ENCODE measurements at regions of chr10 and their contacts with region 1.

Region 1: GRCh38 chr10:97792141-97792721 is 20.4 kb upstream of the SFRP5 start:
- DNase-seq: peak; percentile 62 to 76 (median 65)
- H3K4me3 ChIP-seq: no peak overlapping the region
- H3K4me3 Mint-ChIP-seq: no peak overlapping the region
- H3K27ac ChIP-seq: no peak overlapping the region
- H3K27ac Mint-ChIP-seq: peak overlapping the region in 4 of 7 donors; percentile 42 to 52 (median 49)
- H3K4me1 ChIP-seq: peaks cover 31% of the 10 kb centered on the region
- H3K4me1 Mint-ChIP-seq: peaks cover 17 to 34% (median 23%) of the 10 kb centered on the region in 4 donors
- H3K27me3 ChIP-seq: no peaks in the 10 kb centered on the region
- H3K27me3 Mint-ChIP-seq: peaks cover 2% of the 10 kb centered on the region in 2 donors

Region 2: DNA sequence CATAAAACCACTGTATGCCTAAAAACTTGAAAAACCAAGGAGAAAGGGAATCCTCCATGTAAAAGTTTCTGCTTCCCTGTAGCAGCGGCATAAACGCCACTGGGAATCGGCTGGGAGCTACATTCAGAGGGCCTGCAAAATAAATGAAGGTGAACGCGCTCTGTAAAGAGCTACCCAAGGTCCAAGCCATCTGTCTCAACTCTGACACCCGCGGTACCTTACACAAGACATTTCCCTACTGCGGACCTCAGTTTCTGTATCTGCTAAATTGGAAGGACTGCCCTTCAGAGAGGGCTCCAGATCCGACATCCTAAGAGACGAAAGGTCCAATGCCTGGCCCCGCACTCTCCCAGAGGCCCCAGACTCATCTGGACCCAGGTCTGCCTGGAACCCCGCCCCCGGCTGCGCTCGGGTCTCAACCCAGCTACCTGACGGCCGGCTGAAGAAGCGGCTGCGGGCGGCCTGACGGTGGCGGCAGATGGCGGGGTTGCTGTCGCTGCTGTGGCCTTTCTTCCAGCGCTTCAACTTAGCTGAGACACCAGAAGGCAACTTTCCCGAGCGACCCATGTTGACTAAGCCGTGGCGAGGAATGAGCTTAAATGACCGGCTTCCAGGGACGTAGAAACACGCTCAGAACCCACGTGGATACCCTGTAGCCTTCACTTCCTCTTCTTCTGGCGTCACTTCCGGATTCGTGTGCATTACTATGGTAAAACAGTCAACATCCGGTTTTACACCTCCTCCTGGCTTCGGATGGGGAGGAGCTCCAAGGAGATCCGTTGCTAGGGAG is 391.4 kb before region 1 on chr10 and contains the start of gene RRP12:
- CTCF ChIA-PET with region 1: no interaction called
- POLR2A ChIA-PET with region 1: no interaction called
- intact Hi-C with region 1: no loop called
- DNase-seq: peak; percentile 89 to 97 (median 95)
- H3K4me3 ChIP-seq: peak within 1 kb of the TSS; percentile 71
- H3K4me3 Mint-ChIP-seq: peak within 1 kb of the TSS; percentile 95 to 99 (median 96)
- H3K27ac ChIP-seq: peak within 1 kb of the TSS; percentile 88
- H3K27ac Mint-ChIP-seq: peak within 1 kb of the TSS; percentile 94 to 99 (median 99)
- H3K4me1 ChIP-seq: peaks cover 15% of the 10 kb centered on the region
- H3K4me1 Mint-ChIP-seq: peaks cover 11 to 23% (median 15%) of the 10 kb centered on the region in 4 donors
- H3K27me3 ChIP-seq: no peaks in the 10 kb centered on the region
- H3K27me3 Mint-ChIP-seq: no peaks in the 10 kb centered on the region
- total RNA-seq, gene RRP12: 18.2 to 20.0 TPM

Region 3: DNA sequence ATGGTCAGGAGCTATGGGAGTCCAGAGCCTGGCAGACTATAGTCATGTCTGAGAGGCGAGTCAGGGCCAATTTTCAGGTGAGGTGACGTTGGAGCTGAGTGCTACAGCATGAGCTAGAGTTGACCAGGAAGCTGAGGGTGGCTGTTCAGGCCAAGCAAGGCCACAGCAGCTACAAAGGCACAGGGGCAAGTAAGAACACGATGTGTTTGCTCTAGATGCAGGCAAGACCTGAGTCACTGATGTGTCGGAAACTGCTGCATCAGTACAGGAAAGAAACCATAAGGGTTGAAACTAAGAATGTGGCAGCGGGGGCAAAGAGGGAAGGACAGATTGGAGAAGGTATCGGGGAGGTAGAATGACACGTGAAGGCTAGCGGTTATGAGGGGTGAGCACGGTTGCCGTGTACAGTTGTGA is 379.3 kb before region 1 on chr10:
- CTCF ChIA-PET with region 1: no interaction called
- POLR2A ChIA-PET with region 1: no interaction called
- intact Hi-C with region 1: no loop called
- DNase-seq: no peak
- H3K4me3 ChIP-seq: no peak overlapping the region
- H3K4me3 Mint-ChIP-seq: peak overlapping the region in 4 of 8 donors; percentile 2 to 60 (median 23)
- H3K27ac ChIP-seq: no peak overlapping the region
- H3K27ac Mint-ChIP-seq: peak overlapping the region; percentile 34 to 91 (median 79)
- H3K4me1 ChIP-seq: peaks cover 38% of the 10 kb centered on the region
- H3K4me1 Mint-ChIP-seq: peaks cover 20 to 43% (median 31%) of the 10 kb centered on the region in 4 donors
- H3K27me3 ChIP-seq: no peaks in the 10 kb centered on the region
- H3K27me3 Mint-ChIP-seq: no peaks in the 10 kb centered on the region

Region 4: DNA sequence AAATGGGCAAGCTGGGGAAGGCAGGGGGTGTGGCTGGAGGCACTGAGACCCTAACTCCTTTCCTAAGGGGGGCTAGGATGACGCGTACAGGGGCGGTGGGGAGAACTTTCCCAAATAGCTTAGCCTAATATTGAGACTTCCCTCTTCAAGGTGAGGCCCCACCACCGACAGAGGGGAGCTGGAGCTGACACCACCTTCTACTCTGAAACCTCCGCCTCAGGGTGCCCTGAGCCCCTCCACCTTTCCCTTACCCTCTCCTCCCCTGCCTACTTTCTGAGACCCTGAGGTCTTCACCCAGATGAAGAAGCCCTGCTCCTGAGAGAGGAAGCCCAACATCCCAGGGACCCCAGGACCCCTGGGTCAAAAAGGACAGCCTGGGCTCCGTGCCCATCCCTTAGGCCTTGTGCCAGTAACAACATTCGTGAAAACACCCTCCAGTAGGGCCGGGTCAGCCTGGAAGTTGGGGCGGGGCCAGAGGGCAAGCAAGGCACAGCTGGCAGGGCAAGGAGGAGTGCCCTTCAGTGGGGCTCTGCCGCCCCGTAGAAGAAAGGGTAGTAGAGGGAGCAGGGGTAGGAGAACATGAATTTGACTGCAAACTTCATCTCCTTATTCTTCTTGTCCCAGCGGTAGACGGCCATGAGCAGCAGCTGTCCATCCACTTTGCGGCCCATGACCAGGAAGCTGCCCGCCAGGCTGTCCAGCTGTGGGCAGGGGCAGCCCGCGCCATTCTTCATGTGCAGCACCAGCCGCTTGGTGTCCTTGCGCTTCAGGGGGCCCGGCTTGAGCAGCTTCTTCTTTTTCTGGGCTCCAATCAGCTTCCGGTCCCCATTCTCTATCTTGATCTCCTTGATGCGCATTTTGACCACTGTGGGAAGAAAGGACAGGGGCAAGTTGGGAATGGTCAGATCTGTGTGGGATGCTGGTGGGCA is 25.0 kb before region 1 on chr10:
- CTCF ChIA-PET with region 1: interaction called, 12 read pairs
- POLR2A ChIA-PET with region 1: interaction called, 3 read pairs
- intact Hi-C with region 1: no loop called
- DNase-seq: no peak
- H3K4me3 ChIP-seq: no peak overlapping the region
- H3K4me3 Mint-ChIP-seq: no peak overlapping the region
- H3K27ac ChIP-seq: no peak overlapping the region
- H3K27ac Mint-ChIP-seq: no peak overlapping the region
- H3K4me1 ChIP-seq: peaks cover 6% of the 10 kb centered on the region
- H3K4me1 Mint-ChIP-seq: peaks cover 2 to 18% (median 9%) of the 10 kb centered on the region in 4 donors
- H3K27me3 ChIP-seq: peaks cover 9% of the 10 kb centered on the region
- H3K27me3 Mint-ChIP-seq: peaks cover 19 to 26% of the 10 kb centered on the region in 2 donors

Region 5: GRCh38 chr10:97827778-97828291 is 35.6 kb after region 1 on chr10:
- CTCF ChIA-PET with region 1: interaction called, 10 read pairs
- POLR2A ChIA-PET with region 1: no interaction called
- intact Hi-C with region 1: no loop called
- DNase-seq: no peak
- H3K4me3 ChIP-seq: no peak overlapping the region
- H3K4me3 Mint-ChIP-seq: no peak overlapping the region
- H3K27ac ChIP-seq: no peak overlapping the region
- H3K27ac Mint-ChIP-seq: peak overlapping the region in 2 of 7 donors; percentile 47 to 66
- H3K4me1 ChIP-seq: peaks cover 28% of the 10 kb centered on the region
- H3K4me1 Mint-ChIP-seq: peaks cover 18 to 34% (median 21%) of the 10 kb centered on the region in 4 donors
- H3K27me3 ChIP-seq: no peaks in the 10 kb centered on the region
- H3K27me3 Mint-ChIP-seq: no peaks in the 10 kb centered on the region

Region 6: GRCh38 chr10:97849687-97850402 is 57.6 kb after region 1 on chr10 and contains the start of gene GOLGA7B:
- CTCF ChIA-PET with region 1: interaction called, 42 read pairs
- POLR2A ChIA-PET with region 1: interaction called, 9 read pairs
- intact Hi-C with region 1: loop called (anchors 5 kb)
- DNase-seq: peak; percentile 60 to 72 (median 70)
- H3K4me3 ChIP-seq: peak within 1 kb of the TSS; percentile 76 to 79
- H3K4me3 Mint-ChIP-seq: peak within 1 kb of the TSS; percentile 92 to 98 (median 94)
- H3K27ac ChIP-seq: peak within 1 kb of the TSS; percentile 32
- H3K27ac Mint-ChIP-seq: peak within 1 kb of the TSS; percentile 87 to 94 (median 91)
- H3K4me1 ChIP-seq: peaks cover 40% of the 10 kb centered on the region
- H3K4me1 Mint-ChIP-seq: peaks cover 29 to 46% (median 39%) of the 10 kb centered on the region in 4 donors
- H3K27me3 ChIP-seq: no peaks in the 10 kb centered on the region
- H3K27me3 Mint-ChIP-seq: no peaks in the 10 kb centered on the region
- total RNA-seq, gene GOLGA7B: 7.6 to 7.9 TPM

Region 7: DNA sequence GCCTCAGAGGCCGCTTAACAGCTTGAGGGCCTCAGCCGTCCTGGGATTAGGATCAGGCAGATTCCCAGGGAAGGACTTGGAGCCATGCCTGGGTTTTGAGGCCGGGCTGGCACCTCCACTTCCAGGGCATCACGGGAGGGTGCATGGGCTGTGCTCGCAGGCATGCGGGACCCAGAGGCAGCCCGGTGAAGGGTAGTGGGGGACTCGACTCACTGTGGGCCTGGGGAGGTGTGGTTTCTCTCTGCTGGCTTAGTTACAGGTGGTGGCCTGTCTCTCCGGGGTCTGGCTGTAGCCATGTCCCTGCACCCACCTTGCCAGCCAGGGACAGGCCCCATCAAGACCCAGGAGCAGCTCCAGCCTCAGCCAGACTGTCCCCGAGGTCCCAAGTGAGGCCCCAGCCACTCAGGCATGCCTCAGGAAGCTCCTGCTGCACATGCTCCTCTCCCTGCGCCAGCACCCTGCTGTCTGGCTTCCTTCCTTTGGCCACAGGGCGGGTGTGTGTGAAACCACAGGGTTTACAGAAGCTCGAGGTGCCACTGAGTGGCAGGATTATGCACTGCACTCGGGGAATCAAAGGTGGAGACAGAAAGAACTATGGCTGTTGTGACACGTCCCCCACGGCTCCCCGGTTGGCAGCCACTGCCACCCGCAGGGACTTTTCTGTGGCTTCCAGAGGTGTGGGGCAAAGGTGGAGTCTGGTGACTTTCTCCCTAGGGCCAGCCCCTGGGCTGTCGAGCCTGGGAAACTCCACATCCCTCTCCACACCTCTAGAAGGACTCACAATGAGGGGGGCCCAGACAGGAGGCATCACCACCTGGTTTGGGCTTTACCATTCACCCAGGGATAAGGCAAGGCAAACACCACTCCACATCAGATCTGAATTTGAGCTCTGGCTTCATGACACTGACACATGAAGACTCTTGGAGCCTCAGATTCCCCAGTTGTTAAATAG is 77.1 kb after region 1 on chr10:
- CTCF ChIA-PET with region 1: interaction called, 392 read pairs
- POLR2A ChIA-PET with region 1: interaction called, 26 read pairs
- intact Hi-C with region 1: loop called (anchors 1 kb)
- DNase-seq: peak; percentile 82 to 87 (median 83)
- H3K4me3 ChIP-seq: no peak overlapping the region
- H3K4me3 Mint-ChIP-seq: peak overlapping the region in 4 of 8 donors; percentile 4 to 64 (median 41)
- H3K27ac ChIP-seq: no peak overlapping the region
- H3K27ac Mint-ChIP-seq: peak overlapping the region; percentile 55 to 87 (median 71)
- H3K4me1 ChIP-seq: peaks cover 16% of the 10 kb centered on the region
- H3K4me1 Mint-ChIP-seq: peaks cover 6 to 14% (median 12%) of the 10 kb centered on the region in 4 donors
- H3K27me3 ChIP-seq: no peaks in the 10 kb centered on the region
- H3K27me3 Mint-ChIP-seq: no peaks in the 10 kb centered on the region

Region 8: DNA sequence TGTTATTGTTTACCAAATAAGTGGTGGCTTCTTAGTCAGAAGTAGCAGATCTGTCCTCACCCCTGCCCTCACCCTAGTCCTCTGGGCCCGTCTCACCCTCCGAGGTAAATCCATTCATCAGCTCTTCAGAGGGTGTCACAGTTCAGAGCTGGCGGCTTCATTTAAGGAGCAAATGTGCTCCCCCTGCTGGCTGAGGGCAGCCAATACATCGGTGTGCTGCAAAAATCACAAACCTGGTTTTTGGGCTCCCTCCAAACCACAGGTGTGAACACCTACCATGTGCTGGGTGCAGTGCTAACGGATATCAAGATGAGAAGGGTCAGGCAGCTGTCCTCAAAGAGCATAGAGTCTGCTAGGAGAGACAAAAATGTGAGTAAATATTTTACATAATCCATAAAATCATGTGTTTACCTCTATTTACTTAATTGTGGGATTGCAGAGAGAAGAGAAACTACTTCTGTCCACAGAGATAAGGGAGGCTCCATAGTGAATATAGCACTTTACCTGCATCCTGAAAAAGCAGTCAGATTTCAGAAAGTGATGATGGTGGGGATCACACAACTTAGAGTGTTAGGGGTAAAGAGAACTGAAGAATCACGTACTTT is 253.7 kb after region 1 on chr10:
- CTCF ChIA-PET with region 1: interaction called, 5 read pairs
- POLR2A ChIA-PET with region 1: no interaction called
- intact Hi-C with region 1: loop called (anchors 5 kb)
- DNase-seq: peak; percentile 46 to 54 (median 47)
- H3K4me3 ChIP-seq: no peak overlapping the region
- H3K4me3 Mint-ChIP-seq: no peak overlapping the region
- H3K27ac ChIP-seq: no peak overlapping the region
- H3K27ac Mint-ChIP-seq: no peak overlapping the region
- H3K4me1 ChIP-seq: no peaks in the 10 kb centered on the region
- H3K4me1 Mint-ChIP-seq: peaks cover 0 to 5% (median 3%) of the 10 kb centered on the region in 4 donors
- H3K27me3 ChIP-seq: peaks cover 2% of the 10 kb centered on the region
- H3K27me3 Mint-ChIP-seq: peaks cover 25 to 35% of the 10 kb centered on the region in 2 donors

Measured in CD4-positive, alpha-beta memory T cell (primary cell).